ENCODE measurements at regions of chr3 and their contacts with region 1.

Region 1: GRCh38 chr3:129723558-129724324 is 117.3 kb upstream of the PLXND1 start:
- DNase-seq: no peak
- H3K4me3 ChIP-seq: no peak overlapping the region
- H3K4me3 Mint-ChIP-seq: no peak overlapping the region
- H3K27ac Mint-ChIP-seq: no peak overlapping the region
- H3K4me1 ChIP-seq: peaks cover 15% of the 10 kb centered on the region; the same call in 1 of the 2 replicates
- H3K4me1 Mint-ChIP-seq: no peaks in the 10 kb centered on the region
- H3K27me3 ChIP-seq: no peaks in the 10 kb centered on the region
- H3K27me3 Mint-ChIP-seq: no peaks in the 10 kb centered on the region
- CTCF ChIP-seq: no peak

Region 2: DNA sequence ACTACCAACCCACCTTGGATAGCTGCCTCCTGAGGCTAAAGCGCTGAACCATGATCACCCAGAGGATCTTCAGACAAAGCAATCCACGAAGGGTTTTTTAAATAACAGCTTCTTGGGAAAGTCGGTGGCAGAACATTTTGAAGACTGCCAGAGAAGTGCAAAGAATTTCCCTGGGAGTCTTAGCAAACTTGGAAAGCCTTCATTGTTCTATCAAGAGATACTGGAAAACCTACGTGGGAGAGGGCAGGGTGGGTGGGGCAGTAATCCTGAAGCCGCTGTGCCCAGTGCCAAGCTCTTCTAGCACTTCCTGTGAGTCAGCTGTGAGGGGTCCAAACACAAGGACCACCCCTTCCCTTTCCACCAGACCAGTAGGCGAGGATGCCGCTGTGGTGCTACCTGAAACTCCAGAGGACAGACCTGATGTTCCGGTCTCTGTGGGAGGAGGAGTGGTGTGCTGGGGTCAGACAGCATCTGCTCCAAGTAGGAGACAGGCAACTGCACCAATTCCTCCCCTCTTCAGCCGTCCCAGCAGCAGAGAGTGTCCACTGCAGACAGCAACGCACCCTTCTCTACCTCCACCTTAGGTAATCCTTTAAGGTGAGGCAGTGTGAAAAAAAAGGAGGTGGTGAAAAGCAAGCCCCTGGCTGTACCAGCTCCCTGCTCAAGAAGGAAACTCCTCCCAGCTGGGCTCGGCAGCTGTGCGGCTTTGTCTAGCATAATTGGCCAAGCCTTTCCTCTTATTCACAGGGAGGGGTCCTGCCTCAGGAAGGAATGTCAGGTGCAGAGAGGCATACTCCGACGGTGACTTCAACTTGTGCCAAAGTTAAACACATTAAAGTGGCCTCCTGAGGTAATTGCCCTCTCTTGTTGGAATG is 70.8 kb after region 1 on chr3:
- CTCF ChIA-PET with region 1: no interaction called
- POLR2A ChIA-PET with region 1: interaction called, 10 read pairs
- intact Hi-C with region 1: no loop called
- DNase-seq: peak; percentile 85
- H3K4me3 ChIP-seq: peak overlapping the region; percentile 16
- H3K4me3 Mint-ChIP-seq: peak overlapping the region; percentile 74
- H3K27ac Mint-ChIP-seq: peak overlapping the region; percentile 75
- H3K4me1 ChIP-seq: peaks cover 20% of the 10 kb centered on the region
- H3K4me1 Mint-ChIP-seq: no peaks in the 10 kb centered on the region
- H3K27me3 ChIP-seq: no peaks in the 10 kb centered on the region
- H3K27me3 Mint-ChIP-seq: no peaks in the 10 kb centered on the region
- CTCF ChIP-seq: no peak

Measured in Caco-2 (cell line).